SK-N-SH (cell line): ENCODE measurements at regions of chr17 and their contacts with region 1.

Region 1: DNA sequence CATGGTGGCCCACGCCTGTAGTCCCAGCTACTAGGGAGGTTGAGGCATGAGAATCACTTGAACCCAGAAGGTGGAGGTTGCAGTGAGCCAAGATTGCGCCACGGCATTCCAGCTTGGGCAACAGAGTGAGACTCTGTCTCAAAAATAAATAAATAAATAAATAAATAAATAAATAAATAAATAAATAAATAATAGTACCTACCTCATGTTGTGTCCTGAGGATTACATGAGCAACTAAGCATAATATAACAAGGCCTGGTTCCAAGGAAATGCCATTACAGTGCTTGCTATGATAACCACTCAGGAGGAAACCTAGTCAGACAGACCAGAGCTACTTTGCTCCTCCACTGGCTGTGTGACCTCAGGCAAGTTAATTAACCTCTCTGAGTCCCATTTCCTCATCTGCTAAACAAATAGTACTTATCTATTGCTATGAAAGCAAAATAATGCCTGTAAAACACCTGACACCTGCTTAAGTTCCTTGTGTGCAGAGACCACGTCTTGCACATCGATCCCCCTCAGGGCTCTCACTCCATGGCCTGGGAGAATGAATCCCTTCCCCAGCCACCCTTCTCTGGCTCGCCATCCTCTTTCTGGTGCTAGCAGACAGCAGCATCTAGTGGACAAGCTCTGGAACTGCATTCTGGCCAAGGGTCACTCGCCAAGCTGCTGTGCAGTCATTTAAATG is 7.5 kb downstream of the EPOP start:
- DNase-seq: peak; percentile 88
- H3K4me3 ChIP-seq: peak overlapping the region in 1 of 2 experiments; percentile 50; a peak in 1 of 4 replicates
- H3K27ac ChIP-seq: no peak overlapping the region
- H3K4me1 ChIP-seq: peaks cover 0 to 6% of the 10 kb centered on the region in 2 experiments; a peak in 1 of 4 replicates
- H3K27me3 ChIP-seq: no peaks in the 10 kb centered on the region
- CTCF ChIP-seq: peak; percentile 99
- EP300 ChIP-seq: no peak
- RAD21 ChIP-seq: peak; percentile 98

Region 2: DNA sequence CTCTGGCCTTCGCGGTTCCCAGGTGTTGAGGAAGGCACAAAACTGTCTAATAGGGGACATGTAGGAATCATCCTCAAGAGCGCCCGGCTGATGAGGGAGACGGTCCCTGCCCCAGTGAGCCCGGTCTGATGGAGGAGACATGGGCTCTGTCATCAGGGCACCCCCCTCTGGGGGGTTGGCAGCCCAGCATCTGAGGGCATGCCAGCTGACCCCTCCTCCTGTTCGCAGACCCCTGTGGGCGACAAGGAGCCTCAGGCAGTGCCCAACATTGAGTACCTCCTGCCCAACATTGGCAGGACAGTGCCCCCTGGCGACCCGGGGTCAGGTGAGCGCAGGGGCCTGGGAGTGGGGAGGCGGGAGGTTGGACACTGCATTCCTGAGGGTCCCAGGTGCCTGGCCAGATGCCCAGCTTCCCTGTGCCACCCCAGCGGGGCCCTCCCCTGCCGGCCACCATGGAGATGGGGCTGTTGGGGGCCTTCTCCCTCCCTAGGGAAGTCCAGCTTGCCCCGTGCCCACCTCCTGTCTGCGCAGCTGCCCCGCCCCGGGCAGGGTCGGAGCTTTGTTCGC is 169.0 kb before region 1 on chr17:
- CTCF ChIA-PET with region 1: interaction called, 32 read pairs
- POLR2A ChIA-PET with region 1: no interaction called
- DNase-seq: no peak
- H3K4me3 ChIP-seq: no peak overlapping the region
- H3K27ac ChIP-seq: no peak overlapping the region
- H3K4me1 ChIP-seq: no peaks in the 10 kb centered on the region
- H3K27me3 ChIP-seq: no peaks in the 10 kb centered on the region
- CTCF ChIP-seq: no peak
- EP300 ChIP-seq: no peak
- RAD21 ChIP-seq: no peak

Region 3: DNA sequence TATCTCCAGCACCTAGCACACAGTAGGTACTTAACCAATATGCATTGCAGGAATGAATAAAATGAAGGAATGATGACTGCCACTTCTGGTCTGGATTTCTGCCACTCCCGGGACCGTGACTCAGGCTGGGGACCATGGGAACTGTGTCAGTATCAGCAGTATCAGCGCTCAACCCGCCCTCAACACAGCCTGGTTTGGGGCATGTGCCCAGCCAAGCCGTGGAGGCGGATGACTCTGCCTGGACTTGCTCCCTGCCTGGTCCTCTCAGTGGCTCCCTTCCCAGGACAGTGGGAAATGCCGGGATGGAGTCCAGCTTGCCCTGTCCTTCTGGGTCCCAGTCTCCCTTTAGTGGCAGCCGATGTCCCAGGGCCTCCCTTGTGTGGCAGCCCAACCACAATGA is 116.6 kb before region 1 on chr17:
- CTCF ChIA-PET with region 1: interaction called, 28 read pairs
- POLR2A ChIA-PET with region 1: no interaction called
- DNase-seq: no peak
- H3K4me3 ChIP-seq: no peak overlapping the region
- H3K27ac ChIP-seq: no peak overlapping the region
- H3K4me1 ChIP-seq: peaks cover 0 to 15% of the 10 kb centered on the region in 2 experiments; a peak in 2 of 4 replicates
- H3K27me3 ChIP-seq: no peaks in the 10 kb centered on the region
- CTCF ChIP-seq: no peak
- EP300 ChIP-seq: no peak
- RAD21 ChIP-seq: no peak

Region 4: DNA sequence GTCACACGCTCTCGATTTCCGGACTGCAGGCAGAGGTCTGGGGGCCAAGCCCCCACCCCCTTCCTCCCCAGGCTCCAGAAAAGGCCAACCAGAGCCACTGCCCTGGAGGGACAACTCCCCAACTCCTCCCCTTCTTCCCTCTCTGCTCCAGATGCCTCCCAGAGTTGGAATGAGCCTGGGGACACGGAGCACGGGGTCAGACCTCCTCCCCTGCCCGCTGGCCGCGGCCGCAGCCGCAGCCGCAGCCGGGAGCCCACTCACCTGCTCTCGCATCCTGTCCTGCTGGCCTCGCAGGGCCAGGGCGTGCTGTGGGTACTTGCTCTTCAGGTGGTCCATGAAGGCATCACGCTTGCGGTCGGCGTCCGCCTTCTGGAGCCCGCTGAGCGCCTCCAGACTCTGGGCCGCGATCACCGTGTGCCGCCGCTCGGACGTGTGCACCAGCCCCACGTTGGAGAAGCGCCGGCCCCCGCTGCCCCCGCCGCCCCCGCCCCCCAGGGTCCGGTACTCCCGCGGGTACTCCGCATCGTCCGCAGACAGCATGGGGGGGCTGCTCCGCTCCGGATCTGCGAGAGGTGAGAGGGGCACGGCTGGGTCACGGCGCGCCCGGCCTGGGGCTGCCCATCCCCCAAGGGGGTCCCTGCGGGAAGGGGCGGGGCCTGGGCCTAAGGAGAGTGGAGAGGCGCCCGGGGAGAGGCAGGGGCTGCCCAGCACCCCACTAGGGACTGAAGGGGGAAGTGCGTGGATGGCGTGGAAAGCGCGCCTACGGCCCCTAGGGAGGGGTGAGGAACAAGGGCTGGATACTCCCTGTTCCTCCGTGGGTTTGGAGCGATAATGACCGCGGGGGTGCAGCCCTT is 88.8 kb before region 1 on chr17:
- CTCF ChIA-PET with region 1: interaction called, 33 read pairs
- POLR2A ChIA-PET with region 1: no interaction called
- DNase-seq: peak; percentile 84
- H3K4me3 ChIP-seq: no peak overlapping the region
- H3K27ac ChIP-seq: no peak overlapping the region
- H3K4me1 ChIP-seq: peaks cover 6 to 36% of the 10 kb centered on the region in 2 experiments; a peak in 2 of 4 replicates
- H3K27me3 ChIP-seq: peaks cover 22% of the 10 kb centered on the region; the same call in 1 of the 2 replicates
- CTCF ChIP-seq: no peak
- EP300 ChIP-seq: no peak
- RAD21 ChIP-seq: no peak

Region 5: DNA sequence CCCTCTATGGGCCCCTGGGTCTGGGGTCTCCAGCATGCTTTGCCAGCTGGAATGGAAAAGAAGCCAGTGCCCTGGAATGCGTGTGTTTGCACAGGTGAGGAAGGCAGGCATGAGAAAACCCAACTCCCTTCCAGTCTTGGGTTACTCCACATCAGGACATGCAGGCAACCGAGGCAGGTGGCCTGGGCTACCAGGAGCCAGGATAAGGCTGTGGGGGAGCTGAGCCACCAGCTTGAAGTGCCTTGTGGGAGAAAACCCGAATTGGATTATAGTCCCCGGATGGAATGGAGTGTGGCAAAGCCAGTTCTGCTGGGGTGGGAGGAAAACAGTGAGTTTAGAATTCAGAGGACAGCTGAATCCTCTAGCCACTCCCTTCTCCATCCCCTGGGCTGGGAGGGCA is 68.7 kb before region 1 on chr17:
- CTCF ChIA-PET with region 1: interaction called, 111 read pairs
- POLR2A ChIA-PET with region 1: no interaction called
- DNase-seq: peak; percentile 86
- H3K4me3 ChIP-seq: no peak overlapping the region
- H3K27ac ChIP-seq: no peak overlapping the region
- H3K4me1 ChIP-seq: peaks cover 0 to 32% of the 10 kb centered on the region in 2 experiments; a peak in 1 of 4 replicates
- H3K27me3 ChIP-seq: peaks cover 9% of the 10 kb centered on the region; the same call in 1 of the 2 replicates
- CTCF ChIP-seq: no peak
- EP300 ChIP-seq: no peak
- RAD21 ChIP-seq: no peak

Region 6: GRCh38 chr17:38735161-38735997 is 68.1 kb after region 1 on chr17:
- CTCF ChIA-PET with region 1: interaction called, 14 read pairs
- POLR2A ChIA-PET with region 1: no interaction called
- DNase-seq: peak; percentile 92
- H3K4me3 ChIP-seq: no peak overlapping the region; a peak in 2 of 4 replicates
- H3K27ac ChIP-seq: peak overlapping the region in 1 of 2 experiments; percentile 71; a peak in 3 of 4 replicates
- H3K4me1 ChIP-seq: peaks cover 8 to 58% of the 10 kb centered on the region in 2 experiments; a peak in 1 of 4 replicates
- H3K27me3 ChIP-seq: no peaks in the 10 kb centered on the region
- CTCF ChIP-seq: peak; percentile 95
- EP300 ChIP-seq: no peak
- RAD21 ChIP-seq: peak; percentile 75